ENCODE measurements at regions of chr17 and their contacts with region 1.

Region 1: DNA sequence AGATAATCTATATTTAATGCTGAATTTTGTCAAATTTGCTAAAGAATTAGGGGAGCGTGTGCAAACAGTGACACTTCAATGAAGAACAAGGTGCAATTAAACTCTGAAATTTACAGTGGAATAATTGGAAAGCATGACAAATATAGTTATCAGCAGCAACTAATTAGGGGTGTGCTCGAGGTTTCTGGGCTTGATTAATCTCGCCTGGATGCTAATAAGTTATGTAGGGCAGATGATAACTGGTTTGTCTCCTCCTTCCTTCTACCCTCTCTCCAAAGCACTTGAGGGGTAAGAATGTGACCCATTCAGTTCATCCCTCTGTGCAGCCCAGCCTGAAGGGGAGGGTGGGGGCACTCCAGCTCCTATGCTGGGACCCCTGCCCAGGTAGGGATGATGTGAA is 21.9 kb downstream of the MRM1 start:
- H3K4me3 ChIP-seq: no peak overlapping the region
- H3K27ac ChIP-seq: no peak overlapping the region
- H3K4me1 ChIP-seq: no peaks in the 10 kb centered on the region
- CTCF ChIP-seq: no peak

Region 2: GRCh38 chr17:36657763-36658490 is 34.6 kb after region 1 on chr17:
- CTCF ChIA-PET with region 1: interaction called, 10 read pairs
- POLR2A ChIA-PET with region 1: no interaction called
- H3K4me3 ChIP-seq: peak overlapping the region; percentile 48
- H3K27ac ChIP-seq: peak overlapping the region; percentile 28; the same call in 1 of the 2 replicates
- H3K4me1 ChIP-seq: 0 out of 2 replicates have a peak, but pooled peaks cover 2% of the 10 kb centered on the region
- CTCF ChIP-seq: peak; percentile 85

Region 3: GRCh38 chr17:37067555-37068111 is 444.4 kb after region 1 on chr17:
- CTCF ChIA-PET with region 1: interaction called, 15 read pairs
- POLR2A ChIA-PET with region 1: no interaction called
- H3K4me3 ChIP-seq: no peak overlapping the region
- H3K27ac ChIP-seq: no peak overlapping the region
- H3K4me1 ChIP-seq: peaks cover 5% of the 10 kb centered on the region; the same call in 1 of the 2 replicates
- CTCF ChIP-seq: no peak

Region 4: DNA sequence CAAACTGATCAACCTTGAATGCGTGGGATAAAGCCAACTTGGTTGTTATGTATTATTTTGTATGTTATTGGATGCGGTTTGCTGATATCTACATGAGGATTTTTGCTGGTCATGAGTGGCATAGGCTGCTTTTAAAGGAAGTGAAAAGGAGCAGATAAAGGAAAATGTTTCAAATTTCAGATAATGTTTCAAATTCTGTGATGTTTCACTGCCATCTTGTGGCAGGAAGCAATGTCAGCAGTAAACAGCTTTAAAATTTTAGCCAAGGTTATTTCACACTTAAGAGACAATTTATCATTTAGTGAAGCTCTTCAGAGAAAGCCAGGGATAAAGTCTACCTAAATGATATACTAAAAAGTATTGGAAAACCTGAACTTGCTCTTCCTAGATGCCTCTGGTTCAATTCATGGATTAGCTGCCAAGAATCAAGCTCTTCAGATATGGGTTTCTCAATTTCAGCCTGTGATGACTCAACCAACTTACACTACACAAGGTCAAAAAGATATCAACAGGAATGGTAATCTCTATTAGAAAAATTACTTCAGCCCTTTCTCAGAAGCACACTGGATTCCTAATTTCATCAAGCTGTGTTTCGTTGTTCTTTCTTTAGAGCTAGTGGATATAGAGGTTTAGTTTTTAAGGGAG is 616.5 kb after region 1 on chr17:
- CTCF ChIA-PET with region 1: interaction called, 51 read pairs
- POLR2A ChIA-PET with region 1: no interaction called
- H3K4me3 ChIP-seq: no peak overlapping the region
- H3K27ac ChIP-seq: no peak overlapping the region
- H3K4me1 ChIP-seq: no peaks in the 10 kb centered on the region
- CTCF ChIP-seq: 0 out of 2 replicates have a peak, but pooled peaks have one; percentile 38

Measured in HEK293 (cell line).